Activated CD4-positive, alpha-beta memory T cell treated with anti-CD3 and anti-CD28 coated beads for 36 hours (primary cell): ENCODE measurements at regions of chr5 and their contacts with region 1.

Region 1: GRCh38 chr5:82351754-82352145 is 73.6 kb upstream of the RPS23 start:
- DNase-seq: no peak
- H3K4me3 Mint-ChIP-seq: no peak overlapping the region
- H3K27ac Mint-ChIP-seq: no peak overlapping the region
- H3K4me1 Mint-ChIP-seq: peaks cover 18% of the 10 kb centered on the region
- H3K27me3 Mint-ChIP-seq: no peaks in the 10 kb centered on the region

Region 2: DNA sequence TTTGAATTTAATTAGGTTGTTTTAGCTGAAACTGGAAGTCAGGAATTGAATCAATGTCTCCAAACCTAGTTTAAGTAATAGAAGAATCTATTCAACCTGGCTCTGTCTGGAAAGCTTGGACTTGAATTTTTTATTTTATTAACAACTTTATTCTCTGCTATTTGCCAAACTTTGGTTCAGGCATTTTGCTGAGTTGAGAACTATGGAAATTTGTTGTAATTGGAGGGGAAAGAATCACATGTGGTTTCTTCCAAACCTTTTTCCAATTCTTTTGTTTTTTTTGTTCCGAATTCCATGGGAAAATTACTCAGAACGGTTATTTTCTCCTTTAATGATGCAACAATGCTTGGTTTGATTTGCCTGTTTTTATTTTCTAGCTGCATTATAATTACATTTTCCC is 24.6 kb after region 1 on chr5:
- CTCF ChIA-PET with region 1: no interaction called
- POLR2A ChIA-PET with region 1: no interaction called
- intact Hi-C with region 1: no loop called
- DNase-seq: no peak
- H3K4me3 Mint-ChIP-seq: no peak overlapping the region
- H3K27ac Mint-ChIP-seq: no peak overlapping the region
- H3K4me1 Mint-ChIP-seq: peaks cover 9% of the 10 kb centered on the region
- H3K27me3 Mint-ChIP-seq: no peaks in the 10 kb centered on the region

Region 3: GRCh38 chr5:82466986-82467561 is 115.3 kb after region 1 on chr5:
- CTCF ChIA-PET with region 1: no interaction called
- POLR2A ChIA-PET with region 1: no interaction called
- intact Hi-C with region 1: loop called (anchors 5 kb)
- DNase-seq: no peak
- H3K4me3 Mint-ChIP-seq: no peak overlapping the region
- H3K27ac Mint-ChIP-seq: no peak overlapping the region
- H3K4me1 Mint-ChIP-seq: no peaks in the 10 kb centered on the region
- H3K27me3 Mint-ChIP-seq: peaks cover 3% of the 10 kb centered on the region

Region 4: GRCh38 chr5:82522897-82523296 is 171.1 kb after region 1 on chr5:
- CTCF ChIA-PET with region 1: interaction called, 4 read pairs
- POLR2A ChIA-PET with region 1: no interaction called
- intact Hi-C with region 1: loop called (anchors 10 kb)
- DNase-seq: no peak
- H3K4me3 Mint-ChIP-seq: no peak overlapping the region
- H3K27ac Mint-ChIP-seq: no peak overlapping the region
- H3K4me1 Mint-ChIP-seq: peaks cover 10% of the 10 kb centered on the region
- H3K27me3 Mint-ChIP-seq: peaks cover 4% of the 10 kb centered on the region

Region 5: DNA sequence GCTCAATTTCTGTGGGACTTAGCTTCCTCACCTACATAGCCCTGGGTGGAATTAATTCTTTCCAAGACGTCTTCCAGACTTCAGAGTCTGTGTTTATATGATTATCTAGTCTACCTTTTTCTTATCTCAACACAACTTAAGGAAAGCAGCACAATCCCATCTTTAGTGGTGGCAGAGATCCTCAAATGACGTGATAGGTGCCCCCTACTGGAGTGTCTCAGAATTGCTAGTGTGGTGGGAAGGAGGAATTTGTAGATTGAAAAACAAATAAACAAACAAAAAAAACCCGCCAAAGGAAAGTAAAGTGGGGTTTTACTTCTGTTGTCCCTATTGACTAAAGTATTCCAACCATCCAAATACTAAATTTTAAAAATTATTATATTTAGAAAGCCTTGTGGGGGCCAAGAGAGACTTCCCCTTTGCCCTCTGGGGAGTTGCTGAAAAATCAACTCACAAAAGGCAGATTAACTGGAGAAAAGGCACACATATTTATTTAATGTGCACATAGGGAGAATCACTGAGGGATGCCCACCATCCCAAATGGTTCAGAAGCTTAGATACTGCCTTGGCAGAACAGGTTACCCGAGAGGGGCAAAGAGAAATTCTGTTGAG is 442.2 kb after region 1 on chr5:
- CTCF ChIA-PET with region 1: interaction called, 50 read pairs
- POLR2A ChIA-PET with region 1: no interaction called
- intact Hi-C with region 1: loop called (anchors 1 kb)
- DNase-seq: peak; percentile 44
- H3K4me3 Mint-ChIP-seq: no peak overlapping the region
- H3K27ac Mint-ChIP-seq: no peak overlapping the region
- H3K4me1 Mint-ChIP-seq: no peaks in the 10 kb centered on the region
- H3K27me3 Mint-ChIP-seq: peaks cover 7% of the 10 kb centered on the region

Region 6: DNA sequence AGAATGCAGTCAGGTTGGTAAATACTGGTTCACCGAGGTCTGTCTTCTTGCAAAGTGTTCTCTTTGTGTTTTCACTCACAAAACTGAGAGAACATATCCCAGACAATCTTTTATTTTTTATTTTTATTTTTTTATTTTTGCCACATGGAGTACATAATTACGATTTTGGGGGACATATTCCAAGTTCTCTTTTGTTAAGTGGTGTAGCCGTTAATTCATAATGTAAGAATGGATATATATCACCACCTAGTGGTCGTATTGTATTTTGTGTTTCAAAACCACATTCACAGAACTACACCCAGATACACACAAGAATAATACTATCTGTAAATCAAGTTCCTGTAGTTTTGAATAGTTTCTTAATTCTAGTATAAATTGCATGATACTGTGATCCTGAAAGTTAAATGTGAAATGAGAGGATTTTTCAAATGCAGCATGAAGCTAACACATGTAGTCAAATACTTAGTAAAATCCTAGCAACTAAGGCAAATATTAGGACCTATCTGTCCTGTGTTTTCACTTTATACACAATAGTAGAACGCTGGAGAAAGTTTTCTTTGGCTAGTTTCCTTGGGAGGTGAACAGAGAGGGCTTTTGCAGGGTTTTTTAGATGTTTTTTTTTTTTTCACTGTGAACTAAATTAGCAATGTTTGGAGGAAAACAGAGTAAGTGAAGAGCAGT is 1212.5 kb after region 1 on chr5:
- CTCF ChIA-PET with region 1: interaction called, 5 read pairs
- POLR2A ChIA-PET with region 1: no interaction called
- intact Hi-C with region 1: loop called (anchors 1 kb)
- DNase-seq: no peak
- H3K4me3 Mint-ChIP-seq: no peak overlapping the region
- H3K27ac Mint-ChIP-seq: no peak overlapping the region
- H3K4me1 Mint-ChIP-seq: no peaks in the 10 kb centered on the region
- H3K27me3 Mint-ChIP-seq: peaks cover 29% of the 10 kb centered on the region